ENCODE measurements at regions of chr15 and their contacts with region 1.

Region 1: GRCh38 chr15:67998599-67999122 is 55.5 kb upstream of the PIAS1 start:
- DNase-seq: peak; percentile 62
- ATAC-seq: peak; percentile 64
- H3K4me3 ChIP-seq: no peak overlapping the region
- H3K27ac ChIP-seq: no peak overlapping the region
- H3K4me1 ChIP-seq: peaks cover 7% of the 10 kb centered on the region
- H3K27me3 ChIP-seq: peaks cover 2% of the 10 kb centered on the region
- CTCF ChIP-seq: no peak
- POLR2A ChIP-seq: no peak
- RAD21 ChIP-seq: no peak

Region 2: GRCh38 chr15:67967871-67968431 is 30.7 kb before region 1 on chr15:
- CTCF ChIA-PET with region 1: no interaction called
- POLR2A ChIA-PET with region 1: no interaction called
- dilution Hi-C with region 1: no loop called
- in situ Hi-C with region 1: no loop called
- intact Hi-C with region 1: no loop called
- DNase-seq: peak; percentile 47
- ATAC-seq: peak; percentile 100
- H3K4me3 ChIP-seq: peak overlapping the region; percentile 28
- H3K27ac ChIP-seq: no peak overlapping the region
- H3K4me1 ChIP-seq: no peaks in the 10 kb centered on the region; the same call in 1 of the 2 replicates
- H3K27me3 ChIP-seq: peaks cover 10% of the 10 kb centered on the region
- CTCF ChIP-seq: no peak
- POLR2A ChIP-seq: no peak
- RAD21 ChIP-seq: no peak

Region 3: GRCh38 chr15:68031404-68031803 is 32.7 kb after region 1 on chr15:
- CTCF ChIA-PET with region 1: no interaction called
- POLR2A ChIA-PET with region 1: no interaction called
- dilution Hi-C with region 1: no loop called
- in situ Hi-C with region 1: no loop called
- intact Hi-C with region 1: loop called (anchors 5 kb)
- DNase-seq: no peak
- ATAC-seq: peak; percentile 51
- H3K4me3 ChIP-seq: no peak overlapping the region
- H3K27ac ChIP-seq: no peak overlapping the region
- H3K4me1 ChIP-seq: no peaks in the 10 kb centered on the region
- H3K27me3 ChIP-seq: peaks cover 36% of the 10 kb centered on the region
- CTCF ChIP-seq: no peak
- POLR2A ChIP-seq: no peak
- RAD21 ChIP-seq: no peak

Region 4: DNA sequence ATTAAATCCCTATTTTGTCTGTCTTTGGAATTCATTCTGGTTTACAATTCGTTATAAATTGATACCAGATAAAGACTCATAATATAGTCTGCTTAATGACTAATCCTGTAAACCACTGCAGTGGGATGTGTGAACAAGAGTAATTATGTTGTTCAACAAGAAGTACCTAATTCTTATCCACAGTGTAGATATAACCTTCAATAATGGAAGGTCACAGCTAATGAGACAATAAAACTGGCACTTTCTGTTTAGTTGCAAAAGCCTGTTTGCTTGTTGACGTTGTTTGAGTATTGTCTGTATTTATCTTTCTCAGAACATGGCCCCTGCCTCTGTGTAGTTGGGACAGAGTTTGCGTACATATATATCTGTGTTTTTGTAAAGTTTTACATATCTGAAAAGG is 82.1 kb after region 1 on chr15:
- CTCF ChIA-PET with region 1: no interaction called
- POLR2A ChIA-PET with region 1: no interaction called
- dilution Hi-C with region 1: no loop called
- in situ Hi-C with region 1: no loop called
- intact Hi-C with region 1: no loop called
- DNase-seq: no peak
- ATAC-seq: no peak
- H3K4me3 ChIP-seq: no peak overlapping the region
- H3K27ac ChIP-seq: no peak overlapping the region
- H3K4me1 ChIP-seq: no peaks in the 10 kb centered on the region; the same call in 1 of the 2 replicates
- H3K27me3 ChIP-seq: no peaks in the 10 kb centered on the region
- CTCF ChIP-seq: no peak
- POLR2A ChIP-seq: no peak
- RAD21 ChIP-seq: no peak

Region 5: GRCh38 chr15:68924866-68925560 is 926.4 kb after region 1 on chr15:
- CTCF ChIA-PET with region 1: no interaction called
- POLR2A ChIA-PET with region 1: no interaction called
- dilution Hi-C with region 1: no loop called
- in situ Hi-C with region 1: no loop called
- intact Hi-C with region 1: no loop called
- DNase-seq: peak; percentile 71
- ATAC-seq: peak; percentile 98
- H3K4me3 ChIP-seq: no peak overlapping the region
- H3K27ac ChIP-seq: no peak overlapping the region
- H3K4me1 ChIP-seq: no peaks in the 10 kb centered on the region
- H3K27me3 ChIP-seq: peaks cover 15% of the 10 kb centered on the region
- CTCF ChIP-seq: peak; percentile 93
- POLR2A ChIP-seq: no peak
- RAD21 ChIP-seq: peak; percentile 95

Measured in IMR-90 (cell line).